MCF 10A (cell line): ENCODE measurements at regions of chr12 and their contacts with region 1.

Region 1: GRCh38 chr12:38384816-38385378 is 68.3 kb downstream of the ALG10B start:
- DNase-seq: peak; percentile 98
- H3K4me3 Mint-ChIP-seq: peak overlapping the region; percentile 52
- H3K27ac Mint-ChIP-seq: peak overlapping the region; percentile 47
- H3K4me1 Mint-ChIP-seq: peaks cover 43% of the 10 kb centered on the region
- H3K27me3 Mint-ChIP-seq: no peaks in the 10 kb centered on the region
- CTCF ChIP-seq: peak; percentile 33

Region 2: DNA sequence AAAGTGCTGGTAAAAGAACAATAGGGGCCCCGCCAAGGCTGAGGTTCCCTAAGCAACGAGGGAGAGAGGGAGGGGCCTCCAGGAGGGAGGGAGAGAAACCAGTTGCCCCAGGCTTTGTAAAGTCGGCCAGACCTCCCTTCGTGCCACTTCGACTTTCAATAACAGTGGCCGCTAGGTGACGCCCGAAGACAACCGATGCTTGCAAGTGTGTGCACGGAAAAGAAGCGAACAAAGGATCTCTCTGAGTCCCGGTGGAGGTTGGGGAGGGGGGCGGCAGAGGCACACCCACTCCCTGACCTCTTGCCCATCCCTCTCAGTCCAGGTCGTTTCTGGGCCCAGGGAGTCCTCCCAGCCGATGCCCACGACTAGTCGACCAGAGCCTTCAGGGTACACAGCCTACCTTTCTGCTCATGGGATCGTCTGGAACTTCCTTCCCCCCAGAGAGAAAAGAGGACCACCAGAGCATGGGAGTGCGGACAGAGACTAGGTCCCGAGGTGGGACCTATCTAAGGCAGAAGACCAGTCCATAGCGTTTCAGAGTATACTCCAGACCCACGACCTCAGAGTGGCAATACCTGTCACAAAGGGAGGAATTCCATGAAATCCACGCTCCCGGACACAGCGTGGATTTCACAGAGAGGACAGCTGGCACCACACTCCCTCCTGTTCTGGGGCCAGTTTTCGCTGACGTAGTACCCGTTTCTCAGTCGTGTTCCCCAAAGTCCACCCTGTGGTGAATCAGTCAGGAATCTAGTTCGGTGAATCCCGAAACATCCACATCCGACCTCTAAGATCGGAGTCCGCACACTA is 331.0 kb before region 1 on chr12:
- CTCF ChIA-PET with region 1: no interaction called
- POLR2A ChIA-PET with region 1: no interaction called
- intact Hi-C with region 1: loop called (anchors 5 kb)
- DNase-seq: peak; percentile 68
- H3K4me3 Mint-ChIP-seq: no peak overlapping the region
- H3K27ac Mint-ChIP-seq: no peak overlapping the region
- H3K4me1 Mint-ChIP-seq: peaks cover 8% of the 10 kb centered on the region
- H3K27me3 Mint-ChIP-seq: no peaks in the 10 kb centered on the region
- CTCF ChIP-seq: peak; percentile 47

Region 3: GRCh38 chr12:38374751-38375150 is 10.1 kb before region 1 on chr12:
- CTCF ChIA-PET with region 1: interaction called, 10 read pairs
- POLR2A ChIA-PET with region 1: interaction called, 4 read pairs
- intact Hi-C with region 1: no loop called
- DNase-seq: no peak
- H3K4me3 Mint-ChIP-seq: no peak overlapping the region
- H3K27ac Mint-ChIP-seq: no peak overlapping the region
- H3K4me1 Mint-ChIP-seq: no peaks in the 10 kb centered on the region
- H3K27me3 Mint-ChIP-seq: no peaks in the 10 kb centered on the region
- CTCF ChIP-seq: no peak

Region 4: DNA sequence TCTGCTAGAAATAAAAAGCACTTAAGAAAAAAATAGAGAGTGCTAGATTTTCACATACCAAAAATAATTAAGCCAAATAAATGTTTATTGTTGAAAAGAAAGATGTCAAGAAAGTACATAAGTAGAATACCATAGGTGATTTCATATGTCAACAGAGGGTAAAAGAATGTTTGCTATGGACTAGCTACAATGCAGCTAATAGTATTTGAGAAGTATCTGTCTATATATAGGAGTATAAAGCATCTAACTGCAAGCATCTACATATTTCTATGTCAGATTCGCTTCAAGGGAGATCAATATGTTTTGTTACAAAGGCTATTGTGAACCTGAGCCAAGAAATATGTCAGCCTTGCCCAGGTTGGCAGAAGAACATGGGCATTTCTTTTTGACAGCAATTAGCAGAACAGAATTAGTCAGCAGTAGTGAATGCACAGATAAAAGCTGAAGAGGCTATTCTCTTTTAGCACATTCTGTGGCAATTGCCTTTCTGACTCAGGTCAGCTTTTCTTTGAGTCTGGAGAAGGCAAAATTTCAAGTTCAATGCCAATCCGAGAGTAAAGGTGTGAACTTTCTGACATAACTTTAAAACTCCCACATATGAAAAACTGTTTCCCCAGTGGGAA is 71.8 kb after region 1 on chr12:
- CTCF ChIA-PET with region 1: interaction called, 13 read pairs
- POLR2A ChIA-PET with region 1: interaction called, 4 read pairs
- intact Hi-C with region 1: no loop called
- DNase-seq: peak; percentile 49
- H3K4me3 Mint-ChIP-seq: no peak overlapping the region
- H3K27ac Mint-ChIP-seq: no peak overlapping the region
- H3K4me1 Mint-ChIP-seq: no peaks in the 10 kb centered on the region
- H3K27me3 Mint-ChIP-seq: no peaks in the 10 kb centered on the region
- CTCF ChIP-seq: no peak

Region 5: GRCh38 chr12:38956337-38956736 is 571.4 kb after region 1 on chr12:
- CTCF ChIA-PET with region 1: no interaction called
- POLR2A ChIA-PET with region 1: no interaction called
- intact Hi-C with region 1: no loop called
- DNase-seq: peak; percentile 45
- H3K4me3 Mint-ChIP-seq: no peak overlapping the region
- H3K27ac Mint-ChIP-seq: no peak overlapping the region
- H3K4me1 Mint-ChIP-seq: peaks cover 10% of the 10 kb centered on the region
- H3K27me3 Mint-ChIP-seq: no peaks in the 10 kb centered on the region
- CTCF ChIP-seq: no peak